PC-9 (cell line): ENCODE measurements at regions of chr16 and their contacts with region 1.

Region 1: DNA sequence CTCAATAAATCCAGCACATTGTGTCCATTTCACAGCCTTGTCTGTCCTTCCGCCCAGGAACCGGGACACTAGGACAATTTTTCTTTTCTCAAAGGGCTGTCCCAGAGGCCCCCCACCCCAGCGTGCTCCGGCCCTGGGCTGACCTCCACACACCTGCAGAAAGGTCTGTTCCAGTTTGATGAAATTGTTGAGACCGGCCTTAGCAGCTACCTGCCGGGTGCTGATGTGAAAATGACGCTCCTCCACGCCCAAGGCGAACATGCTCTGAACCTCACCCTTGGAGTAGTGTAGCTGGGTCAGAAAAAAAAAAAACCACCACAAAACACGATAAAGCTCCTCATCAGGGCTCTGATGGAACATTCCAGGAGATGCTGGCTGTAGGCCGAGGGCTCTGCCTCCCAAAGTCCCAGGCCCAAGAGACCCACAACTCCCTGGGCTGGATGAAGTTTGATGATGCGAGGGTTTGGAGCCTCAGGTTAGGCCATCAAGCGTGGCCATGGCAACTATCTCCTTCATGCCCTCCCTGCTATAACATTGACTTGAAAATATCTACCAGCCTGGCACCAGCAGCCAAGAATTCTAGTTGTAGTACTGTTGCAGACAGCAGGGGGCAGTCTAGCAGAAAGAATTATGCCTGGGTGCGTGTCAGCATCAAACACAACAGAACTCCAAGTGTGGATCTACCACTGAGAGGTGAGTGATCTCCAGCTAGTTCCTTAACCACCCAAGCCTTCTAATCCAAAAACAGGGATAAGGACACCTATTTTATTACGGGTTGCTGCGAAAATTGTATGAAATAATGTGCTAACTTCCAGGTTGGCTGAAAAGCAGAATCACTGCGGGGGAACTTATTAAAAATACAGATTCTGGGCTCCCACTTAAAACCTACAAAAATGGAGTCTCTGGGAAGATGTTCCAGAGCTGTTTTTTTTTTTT is 62.1 kb downstream of the RMI2 start:
- DNase-seq: peak; percentile 48 to 72
- H3K4me3 ChIP-seq: no peak overlapping the region
- H3K27ac ChIP-seq: no peak overlapping the region
- H3K4me1 ChIP-seq: no peaks in the 10 kb centered on the region
- H3K27me3 ChIP-seq: no peaks in the 10 kb centered on the region
- CTCF ChIP-seq: peak; percentile 85

Region 2: GRCh38 chr16:10971560-10971961 is 435.8 kb before region 1 on chr16:
- CTCF ChIA-PET with region 1: no interaction called
- POLR2A ChIA-PET with region 1: no interaction called
- intact Hi-C with region 1: loop called (anchors 2 kb)
- DNase-seq: peak; percentile 80 to 82
- H3K4me3 ChIP-seq: no peak overlapping the region
- H3K27ac ChIP-seq: no peak overlapping the region
- H3K4me1 ChIP-seq: peaks cover 9% of the 10 kb centered on the region
- H3K27me3 ChIP-seq: no peaks in the 10 kb centered on the region
- CTCF ChIP-seq: peak; percentile 89

Region 3: DNA sequence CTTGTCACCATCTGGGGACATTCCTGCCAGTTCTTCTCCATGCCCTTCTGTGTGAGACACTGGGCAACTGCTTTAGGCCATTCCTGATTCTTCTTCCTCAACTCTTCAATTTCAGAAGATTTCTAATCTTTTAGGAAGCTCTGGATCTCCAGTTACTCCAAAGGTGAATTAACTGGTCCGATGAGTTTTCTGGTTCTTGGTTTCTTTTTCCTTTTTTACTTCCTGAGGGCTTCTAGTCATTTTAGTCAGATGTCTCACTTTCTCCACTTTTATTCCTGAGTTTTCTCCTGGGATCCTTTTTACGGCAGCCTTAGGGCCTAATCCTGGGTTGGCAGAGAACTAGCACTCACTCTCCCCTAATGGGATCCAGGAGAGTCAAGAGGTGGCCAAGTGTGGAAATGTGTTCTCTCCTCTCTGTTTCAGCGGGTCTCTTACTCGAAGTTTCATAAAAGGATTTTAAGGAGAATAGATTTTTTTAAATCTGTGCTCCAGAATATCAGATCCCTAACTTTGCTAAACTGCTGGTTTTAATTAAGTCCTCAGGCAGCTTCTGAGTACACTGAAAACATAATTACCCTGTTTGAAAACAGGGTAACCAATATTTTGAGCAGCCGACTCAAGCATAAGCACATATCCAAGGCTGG is 45.6 kb after region 1 on chr16:
- CTCF ChIA-PET with region 1: no interaction called
- POLR2A ChIA-PET with region 1: no interaction called
- intact Hi-C with region 1: no loop called
- DNase-seq: no peak
- H3K4me3 ChIP-seq: no peak overlapping the region
- H3K27ac ChIP-seq: no peak overlapping the region
- H3K4me1 ChIP-seq: no peaks in the 10 kb centered on the region
- H3K27me3 ChIP-seq: no peaks in the 10 kb centered on the region
- CTCF ChIP-seq: no peak

Region 4: GRCh38 chr16:11613381-11614303 is 206.3 kb after region 1 on chr16:
- CTCF ChIA-PET with region 1: no interaction called
- POLR2A ChIA-PET with region 1: interaction called, 27 read pairs
- intact Hi-C with region 1: no loop called
- DNase-seq: peak; percentile 54 to 70
- H3K4me3 ChIP-seq: no peak overlapping the region
- H3K27ac ChIP-seq: peak overlapping the region; percentile 94
- H3K4me1 ChIP-seq: peaks cover 84% of the 10 kb centered on the region
- H3K27me3 ChIP-seq: no peaks in the 10 kb centered on the region
- CTCF ChIP-seq: no peak

Region 5: DNA sequence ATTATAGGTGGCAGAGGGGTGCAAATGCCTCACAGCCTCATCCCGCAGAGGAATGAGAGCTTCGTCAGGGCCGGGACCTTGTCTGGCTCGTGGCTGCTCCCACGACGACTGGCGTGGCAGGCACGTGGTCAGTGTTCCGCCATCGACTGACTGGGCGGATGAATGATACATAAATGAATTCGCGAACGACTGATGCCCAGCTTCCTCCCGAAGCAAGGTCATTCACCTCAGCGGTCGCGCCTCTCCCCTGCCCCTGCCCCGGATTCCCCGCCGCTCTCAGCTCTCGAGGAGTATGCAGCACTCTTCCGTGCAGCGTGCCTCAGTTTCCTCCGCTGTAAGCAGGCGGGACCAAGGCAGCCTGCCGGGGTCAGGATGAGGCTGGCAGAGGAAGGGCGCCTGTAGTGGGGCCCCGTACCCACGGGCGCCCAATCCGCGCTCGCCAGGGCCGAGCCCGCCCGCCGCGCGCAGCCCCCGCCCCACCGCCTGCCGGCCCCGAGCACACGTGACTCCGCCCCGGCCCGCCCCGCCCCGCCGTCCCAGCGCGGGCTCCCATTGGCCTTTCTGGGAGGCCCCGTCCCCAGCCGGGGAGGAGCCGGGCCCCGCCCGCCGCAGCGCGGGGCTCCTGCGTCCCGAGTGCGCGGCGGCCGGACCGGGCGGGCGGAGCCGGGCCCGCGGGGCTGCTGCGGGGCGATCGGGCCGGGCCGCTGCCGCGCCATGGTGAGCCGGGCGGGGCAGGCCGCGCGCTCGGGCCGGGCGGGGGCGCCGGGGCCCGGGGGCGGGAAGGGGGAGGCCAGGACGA is 260.7 kb after region 1 on chr16 and contains the start of gene SNN:
- CTCF ChIA-PET with region 1: no interaction called
- POLR2A ChIA-PET with region 1: no interaction called
- intact Hi-C with region 1: loop called (anchors 10 kb)
- DNase-seq: peak; percentile 61 to 92
- H3K4me3 ChIP-seq: peak within 1 kb of the TSS; percentile 53; the same call in 1 of the 2 replicates
- H3K27ac ChIP-seq: no peak within 1 kb of the TSS
- H3K4me1 ChIP-seq: no peaks in the 10 kb centered on the region
- H3K27me3 ChIP-seq: no peaks in the 10 kb centered on the region
- CTCF ChIP-seq: no peak
- total RNA-seq, gene SNN: 12.6 and 17.0 TPM in 2 replicates